A549 (cell line): ENCODE measurements at regions of chr3 and their contacts with region 1.

Region 1: DNA sequence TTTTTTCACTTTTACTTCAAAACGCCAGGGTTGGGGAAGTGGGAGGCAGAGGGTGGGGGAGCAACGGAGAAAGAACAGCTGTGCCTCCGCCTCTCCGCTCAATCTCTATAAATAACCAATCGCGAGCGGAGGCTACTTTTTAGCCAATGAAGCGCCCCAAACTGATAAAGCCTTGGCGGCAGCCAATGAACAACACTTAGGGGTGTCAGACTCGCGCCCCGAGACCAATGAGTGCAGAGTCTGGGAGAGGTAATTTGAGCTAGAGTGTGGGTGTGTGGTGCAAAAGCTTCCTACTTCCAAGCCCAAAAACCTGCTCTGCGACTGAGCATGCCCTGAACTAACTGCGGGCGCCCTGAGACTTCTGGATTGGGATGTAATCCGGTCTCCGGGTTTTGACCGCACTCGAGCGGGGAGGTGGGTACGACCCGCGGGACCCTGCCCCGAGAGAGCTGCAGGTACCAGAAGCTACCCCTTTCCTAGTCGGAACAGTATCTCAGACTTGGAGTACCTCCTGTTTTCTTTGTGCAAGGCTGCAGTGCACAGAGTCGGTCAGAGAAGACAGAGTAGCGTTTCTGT is 800 bp upstream of the RAP2B start:
- DNase-seq: peak; percentile 99 to 100
- ATAC-seq: peak; percentile 76 to 91
- H3K4me3 ChIP-seq: peak overlapping the region; percentile 91
- H3K27ac ChIP-seq: peak overlapping the region; percentile 93 to 97
- H3K4me1 ChIP-seq: peaks cover 46% of the 10 kb centered on the region
- CTCF ChIP-seq: no peak
- EP300 ChIP-seq: no peak
- POLR2A ChIP-seq: peak; percentile 17
- RAD21 ChIP-seq: no peak

Region 2: GRCh38 chr3:153052096-153052460 is 109.1 kb before region 1 on chr3:
- CTCF ChIA-PET with region 1: interaction called, 12 read pairs
- POLR2A ChIA-PET with region 1: interaction called, 43 read pairs
- DNase-seq: peak; percentile 42 to 83
- ATAC-seq: peak; percentile 89 to 92
- H3K4me3 ChIP-seq: no peak overlapping the region
- H3K27ac ChIP-seq: peak overlapping the region; percentile 77 to 89
- H3K4me1 ChIP-seq: peaks cover 21% of the 10 kb centered on the region
- CTCF ChIP-seq: no peak
- EP300 ChIP-seq: no peak
- POLR2A ChIP-seq: no peak
- RAD21 ChIP-seq: no peak

Region 3: GRCh38 chr3:153130312-153130990 is 30.8 kb before region 1 on chr3:
- CTCF ChIA-PET with region 1: no interaction called
- POLR2A ChIA-PET with region 1: interaction called, 15 read pairs
- DNase-seq: peak; percentile 33 to 43
- ATAC-seq: peak; percentile 83 to 84
- H3K4me3 ChIP-seq: no peak overlapping the region
- H3K27ac ChIP-seq: peak overlapping the region; percentile 57 to 75
- H3K4me1 ChIP-seq: peaks cover 20% of the 10 kb centered on the region
- CTCF ChIP-seq: no peak
- EP300 ChIP-seq: no peak
- POLR2A ChIP-seq: no peak
- RAD21 ChIP-seq: no peak

Region 4: DNA sequence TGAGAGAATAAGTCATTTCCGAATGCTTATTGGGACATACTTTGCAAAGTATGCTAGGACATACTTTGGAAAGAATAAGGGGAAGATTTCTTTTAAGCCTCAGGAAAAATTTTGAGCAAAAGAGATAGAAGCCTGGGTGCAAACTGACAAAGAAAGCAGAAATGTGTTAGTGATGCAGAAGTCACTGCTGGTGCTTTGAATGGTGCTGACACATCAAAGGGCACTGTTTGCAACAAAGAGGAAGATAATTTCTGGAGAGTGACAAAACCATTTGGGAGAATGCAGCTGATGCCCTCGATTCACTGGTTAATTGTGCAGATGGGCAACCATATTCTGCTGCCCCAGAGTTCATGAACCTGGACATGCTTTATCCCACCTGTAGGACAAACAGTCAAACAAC is 10.2 kb before region 1 on chr3:
- CTCF ChIA-PET with region 1: no interaction called
- POLR2A ChIA-PET with region 1: interaction called, 18 read pairs
- DNase-seq: no peak
- ATAC-seq: no peak
- H3K4me3 ChIP-seq: no peak overlapping the region
- H3K27ac ChIP-seq: no peak overlapping the region
- H3K4me1 ChIP-seq: 0 out of 3 replicates have a peak, but pooled peaks cover 3% of the 10 kb centered on the region
- CTCF ChIP-seq: no peak
- EP300 ChIP-seq: no peak
- POLR2A ChIP-seq: no peak
- RAD21 ChIP-seq: no peak